Common myeloid progenitor, CD34-positive (primary cell): ENCODE measurements at regions of chr3 and their contacts with region 1.

Region 1: DNA sequence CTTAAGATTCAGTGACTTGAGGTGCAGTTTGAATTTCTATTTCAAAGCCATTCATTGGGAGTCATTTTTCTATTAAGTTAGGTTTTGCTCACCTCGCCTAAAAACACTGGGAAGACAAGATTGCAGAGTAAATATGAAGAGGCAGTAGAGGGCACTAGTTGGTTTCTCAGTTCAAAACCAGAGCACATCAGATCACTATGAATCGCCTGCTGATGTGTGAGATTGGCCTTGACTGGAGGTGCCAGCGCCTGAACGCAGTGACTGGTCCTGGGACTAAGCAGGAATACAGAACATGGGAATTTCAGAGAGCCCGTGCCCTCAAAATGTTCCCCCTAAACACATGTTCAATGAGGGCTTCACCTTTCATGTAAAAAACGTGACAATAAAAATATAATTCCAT is 229.0 kb downstream of the ITPR1 start:
- DNase-seq: peak; percentile 56 to 71 (median 65)
- H3K4me3 ChIP-seq: no peak overlapping the region
- H3K27ac ChIP-seq: no peak overlapping the region
- H3K4me1 ChIP-seq: peaks cover 0 to 29% (median 12%) of the 10 kb centered on the region in 4 experiments
- H3K27me3 ChIP-seq: no peaks in the 10 kb centered on the region

Region 2: DNA sequence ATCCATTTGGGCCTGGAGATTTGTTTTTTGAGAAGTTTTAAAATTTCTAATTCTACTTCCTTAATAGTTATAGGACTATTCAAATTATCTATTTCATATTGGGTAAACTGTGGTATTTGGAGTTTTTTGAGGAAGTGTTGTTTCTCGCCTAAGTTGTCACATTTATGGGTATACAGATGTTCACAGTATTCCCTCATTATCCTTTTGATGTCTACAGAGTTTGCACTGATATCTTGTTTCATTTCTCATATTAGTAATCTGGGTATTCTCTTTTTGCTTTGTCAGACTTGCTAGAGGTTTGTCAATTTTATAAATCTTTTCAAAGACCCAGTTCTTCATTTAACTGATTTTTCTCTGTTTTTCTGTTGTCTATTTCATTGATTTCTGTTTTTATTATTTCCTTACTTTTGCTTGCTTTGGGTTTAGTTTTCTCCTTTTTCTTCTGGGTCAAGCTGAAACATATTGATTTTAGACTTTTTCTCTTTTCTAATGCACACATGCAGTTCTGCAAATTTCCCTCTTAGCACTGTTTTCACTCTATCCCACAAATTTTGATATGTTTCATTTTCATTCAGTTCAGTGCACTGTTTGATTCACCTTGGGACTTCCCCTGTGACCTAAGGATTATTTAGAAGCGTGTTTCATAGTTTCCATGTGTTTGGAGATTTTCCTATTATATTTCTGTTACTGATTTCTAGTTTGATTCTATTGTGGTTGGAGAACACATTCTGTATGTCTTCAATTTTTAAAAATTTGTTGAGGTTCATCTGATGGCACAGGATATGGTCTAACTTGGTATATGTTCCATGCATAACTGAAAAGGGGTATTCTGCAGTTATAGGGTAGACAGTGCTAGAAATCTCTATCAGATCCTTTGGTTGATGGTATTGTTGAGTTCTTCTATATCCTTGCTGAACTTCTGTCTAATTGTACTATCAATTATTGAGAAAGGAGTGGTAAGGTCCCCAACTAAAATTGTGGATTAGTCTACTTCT is 334.6 kb before region 1 on chr3:
- CTCF ChIA-PET with region 1: no interaction called
- POLR2A ChIA-PET with region 1: no interaction called
- DNase-seq: no peak
- H3K4me3 ChIP-seq: no peak overlapping the region
- H3K27ac ChIP-seq: no peak overlapping the region
- H3K4me1 ChIP-seq: peaks cover 0 to 7% (median 0%) of the 10 kb centered on the region in 4 experiments
- H3K27me3 ChIP-seq: no peaks in the 10 kb centered on the region

Region 3: DNA sequence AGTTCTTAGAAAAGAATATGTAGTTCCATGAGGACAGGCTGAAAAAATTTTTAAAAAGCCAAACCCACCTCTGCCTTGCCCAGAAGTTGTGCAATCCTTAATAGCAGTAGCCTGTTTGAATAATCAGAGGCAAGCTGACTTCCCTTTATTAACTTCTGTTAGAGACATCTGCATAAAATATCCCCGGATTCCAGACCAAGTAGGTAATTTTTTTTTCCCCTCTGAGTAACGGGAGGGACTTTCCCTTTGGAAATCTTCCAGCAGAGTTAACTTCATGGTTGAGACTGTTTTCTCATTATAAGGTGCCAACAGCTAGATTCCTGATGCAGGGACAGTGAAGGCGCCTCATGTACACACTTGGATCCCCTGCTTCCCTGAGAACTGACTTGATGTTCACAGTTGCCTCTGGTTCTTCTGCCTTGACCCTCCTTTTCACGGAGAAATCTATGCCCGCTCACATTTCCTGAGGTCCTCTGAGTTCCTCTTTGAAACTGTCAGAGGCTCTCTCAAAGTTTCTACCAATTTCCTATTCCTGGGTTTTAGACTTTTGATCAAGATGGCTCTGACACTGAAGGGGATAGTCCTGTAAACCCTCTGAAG is 29.5 kb after region 1 on chr3:
- CTCF ChIA-PET with region 1: interaction called, 11 read pairs
- POLR2A ChIA-PET with region 1: no interaction called
- DNase-seq: peak in 2 of 3 donors; percentile 86
- H3K4me3 ChIP-seq: peak overlapping the region in 6 of 7 experiments; percentile 15 to 54 (median 34)
- H3K27ac ChIP-seq: peak overlapping the region; percentile 61 to 77
- H3K4me1 ChIP-seq: peaks cover 33 to 80% (median 57%) of the 10 kb centered on the region in 4 experiments
- H3K27me3 ChIP-seq: no peaks in the 10 kb centered on the region

Region 4: GRCh38 chr3:4780545-4780957 is 58.4 kb after region 1 on chr3:
- CTCF ChIA-PET with region 1: interaction called, 12 read pairs
- POLR2A ChIA-PET with region 1: no interaction called
- DNase-seq: no peak
- H3K4me3 ChIP-seq: no peak overlapping the region
- H3K27ac ChIP-seq: no peak overlapping the region
- H3K4me1 ChIP-seq: peaks cover 0 to 23% (median 6%) of the 10 kb centered on the region in 4 experiments
- H3K27me3 ChIP-seq: no peaks in the 10 kb centered on the region

Region 5: DNA sequence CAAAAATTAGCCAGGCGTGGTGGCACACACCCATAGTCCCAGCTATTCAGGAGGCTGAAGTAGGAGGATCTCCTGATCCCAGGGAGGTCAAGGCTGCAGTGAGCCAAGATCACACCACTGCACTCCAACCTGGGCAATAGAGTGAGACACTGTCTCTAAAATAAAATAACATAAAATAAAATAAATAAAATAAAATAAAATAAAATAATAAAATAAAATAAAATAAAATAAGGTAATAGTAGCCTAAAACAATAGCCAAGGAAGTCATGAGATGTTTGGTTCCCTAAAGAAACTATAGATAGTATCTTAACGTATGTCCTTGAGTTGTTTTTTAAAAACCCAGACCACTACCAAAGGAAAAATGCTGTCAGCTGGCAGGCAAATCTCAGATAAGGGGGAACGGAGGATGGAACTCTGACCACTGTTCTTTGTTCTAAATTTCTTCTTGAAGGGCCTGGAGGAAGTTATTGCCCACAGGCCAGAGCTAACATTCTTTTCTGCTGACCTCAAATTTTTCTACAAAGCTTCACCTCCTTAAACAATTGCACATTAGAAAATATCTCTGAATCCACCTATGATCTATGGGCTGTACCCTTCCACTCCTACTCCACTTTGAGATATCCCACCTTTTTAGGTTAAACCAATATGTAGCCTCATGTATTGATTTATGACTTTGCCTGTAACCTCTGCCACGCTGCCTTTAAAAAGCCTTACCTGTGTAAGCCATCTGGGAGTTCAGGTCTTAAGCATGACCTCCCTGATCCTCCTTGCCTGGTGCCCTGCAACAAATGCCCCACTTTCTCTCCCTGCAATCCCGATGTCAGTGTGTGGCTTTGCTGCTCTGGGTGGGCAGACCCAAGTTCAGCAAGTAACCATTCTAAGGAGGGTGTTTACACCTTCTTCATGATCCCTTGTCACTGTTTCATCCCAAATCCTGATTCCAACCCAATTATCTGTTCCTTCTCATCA is 131.0 kb after region 1 on chr3:
- CTCF ChIA-PET with region 1: no interaction called
- POLR2A ChIA-PET with region 1: no interaction called
- DNase-seq: peak in 1 of 3 donors; percentile 36
- H3K4me3 ChIP-seq: peak overlapping the region in 2 of 7 experiments; percentile 22 to 26
- H3K27ac ChIP-seq: no peak overlapping the region
- H3K4me1 ChIP-seq: peaks cover 23 to 64% (median 53%) of the 10 kb centered on the region in 4 experiments
- H3K27me3 ChIP-seq: no peaks in the 10 kb centered on the region

Region 6: DNA sequence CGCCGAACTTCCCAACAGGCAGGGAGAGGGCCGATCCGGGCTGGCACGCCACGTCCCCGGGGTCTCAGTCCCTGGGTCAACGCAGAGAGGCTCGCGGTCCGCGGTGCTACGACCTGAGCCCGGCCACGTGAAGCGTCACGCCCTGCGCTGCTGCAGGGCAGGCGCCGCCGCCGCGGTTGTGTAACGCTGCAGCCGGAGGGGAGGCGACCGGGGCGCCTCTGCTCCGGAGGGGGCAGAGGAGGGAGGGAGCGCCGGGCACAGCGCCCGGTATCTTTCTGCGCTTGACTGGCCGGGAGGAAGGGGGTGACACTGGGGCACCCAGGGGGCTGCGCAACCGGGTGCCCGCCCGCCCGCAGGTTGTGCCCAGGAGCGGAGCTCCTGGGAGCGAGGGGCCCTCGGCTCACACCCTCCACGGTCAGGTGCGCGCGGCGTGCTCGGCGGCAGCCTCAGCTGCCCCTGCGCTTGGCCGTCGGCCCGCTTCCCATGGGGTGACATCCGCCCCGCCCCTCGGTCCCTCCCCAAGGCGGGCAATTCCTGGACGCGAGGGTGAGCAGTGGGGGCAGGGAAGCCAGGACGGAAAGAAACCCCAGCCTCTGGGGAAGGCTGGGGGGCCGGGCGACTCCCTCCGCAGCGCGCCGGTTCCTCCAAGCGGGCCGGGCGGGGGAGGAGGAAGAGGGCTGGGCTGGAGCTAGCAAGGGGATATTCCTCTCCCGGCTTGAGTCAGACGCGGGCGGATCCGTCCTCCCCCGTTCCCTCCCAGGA is 256.3 kb after region 1 on chr3:
- CTCF ChIA-PET with region 1: interaction called, 25 read pairs
- POLR2A ChIA-PET with region 1: interaction called, 13 read pairs
- DNase-seq: peak; percentile 92 to 98 (median 94)
- H3K4me3 ChIP-seq: peak overlapping the region; percentile 60 to 99 (median 72)
- H3K27ac ChIP-seq: peak overlapping the region; percentile 88 to 93
- H3K4me1 ChIP-seq: peaks cover 11 to 62% (median 55%) of the 10 kb centered on the region in 4 experiments
- H3K27me3 ChIP-seq: no peaks in the 10 kb centered on the region

Region 7: DNA sequence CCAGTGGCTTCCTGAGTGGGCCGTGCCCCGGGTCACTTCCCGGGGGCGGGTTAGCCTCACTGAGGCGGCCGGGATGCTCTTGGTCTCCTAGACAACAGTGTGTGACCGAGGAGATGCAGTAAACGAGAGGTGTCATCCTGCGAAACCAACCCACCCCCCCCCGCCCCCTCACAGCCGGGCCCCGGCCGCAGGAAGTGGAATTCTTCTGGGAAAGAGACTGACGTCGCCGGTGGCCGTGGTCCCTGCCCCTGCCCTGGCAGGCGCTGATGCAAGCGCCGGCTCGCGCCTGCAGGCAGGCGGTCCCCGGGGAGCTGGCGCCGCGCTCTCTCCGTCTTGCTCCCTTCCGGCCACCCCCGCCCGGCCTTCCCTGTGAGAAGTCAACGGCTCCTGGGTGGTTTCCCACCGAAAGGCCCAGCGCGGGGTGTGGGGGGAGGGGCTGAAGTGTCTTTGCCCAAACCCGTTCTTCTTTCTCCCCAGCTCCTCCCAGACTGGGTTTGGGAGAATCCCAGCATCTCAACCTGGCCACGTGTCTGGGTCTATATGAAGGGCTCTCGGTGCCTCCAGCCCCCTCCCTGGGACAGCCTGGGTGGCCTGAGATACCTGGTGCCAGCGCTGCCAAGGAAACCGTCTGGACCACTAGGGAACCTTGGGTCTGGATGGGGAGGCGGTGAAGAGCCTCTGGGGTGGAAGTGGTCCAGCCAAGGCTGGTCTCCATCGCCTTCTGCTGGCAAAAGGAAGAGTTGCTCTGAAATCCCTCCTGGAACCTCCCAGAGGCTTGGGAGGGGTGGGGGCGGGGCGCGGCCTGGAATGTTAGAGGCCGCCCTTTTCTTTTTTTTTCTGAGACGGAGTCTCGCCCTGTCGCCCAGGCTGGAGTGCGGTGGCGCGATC is 304.5 kb after region 1 on chr3:
- CTCF ChIA-PET with region 1: interaction called, 29 read pairs
- POLR2A ChIA-PET with region 1: no interaction called
- DNase-seq: peak; percentile 84 to 89 (median 86)
- H3K4me3 ChIP-seq: peak overlapping the region; percentile 13 to 78 (median 45)
- H3K27ac ChIP-seq: no peak overlapping the region
- H3K4me1 ChIP-seq: peaks cover 0 to 16% (median 13%) of the 10 kb centered on the region in 4 experiments
- H3K27me3 ChIP-seq: no peaks in the 10 kb centered on the region

Region 8: DNA sequence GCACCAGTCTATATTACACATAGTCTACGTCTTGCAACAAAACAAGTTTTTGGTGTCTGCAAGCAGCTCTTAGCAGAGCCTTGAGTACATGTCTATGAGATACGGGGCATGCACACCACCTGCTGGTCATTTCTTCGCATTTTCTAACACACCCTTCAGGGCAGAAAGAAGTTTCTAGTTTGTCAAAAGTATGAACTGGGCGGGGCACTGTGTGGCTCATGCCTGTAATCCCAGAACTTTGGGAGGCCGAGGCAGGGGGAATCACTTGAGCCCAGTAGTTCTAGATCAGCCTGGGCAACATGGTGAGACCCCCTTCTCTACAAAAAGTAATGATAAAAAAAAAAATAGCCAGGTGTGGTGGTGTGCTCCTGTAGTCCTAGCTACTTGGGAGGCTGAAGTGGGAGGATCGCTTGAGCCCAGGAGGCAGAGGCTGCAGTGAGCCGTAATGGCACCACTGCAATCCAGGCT is 335.8 kb after region 1 on chr3:
- CTCF ChIA-PET with region 1: interaction called, 298 read pairs
- POLR2A ChIA-PET with region 1: interaction called, 3 read pairs
- DNase-seq: peak; percentile 86 to 94 (median 91)
- H3K4me3 ChIP-seq: no peak overlapping the region
- H3K27ac ChIP-seq: no peak overlapping the region
- H3K4me1 ChIP-seq: peaks cover 10 to 50% (median 26%) of the 10 kb centered on the region in 4 experiments
- H3K27me3 ChIP-seq: no peaks in the 10 kb centered on the region

Region 9: GRCh38 chr3:5138214-5138981 is 416.3 kb after region 1 on chr3:
- CTCF ChIA-PET with region 1: no interaction called
- POLR2A ChIA-PET with region 1: no interaction called
- DNase-seq: no peak
- H3K4me3 ChIP-seq: no peak overlapping the region
- H3K27ac ChIP-seq: no peak overlapping the region
- H3K4me1 ChIP-seq: peaks cover 10 to 28% (median 23%) of the 10 kb centered on the region in 4 experiments
- H3K27me3 ChIP-seq: no peaks in the 10 kb centered on the region